ENCODE measurements at regions of chr5 and their contacts with region 1.

Region 1: DNA sequence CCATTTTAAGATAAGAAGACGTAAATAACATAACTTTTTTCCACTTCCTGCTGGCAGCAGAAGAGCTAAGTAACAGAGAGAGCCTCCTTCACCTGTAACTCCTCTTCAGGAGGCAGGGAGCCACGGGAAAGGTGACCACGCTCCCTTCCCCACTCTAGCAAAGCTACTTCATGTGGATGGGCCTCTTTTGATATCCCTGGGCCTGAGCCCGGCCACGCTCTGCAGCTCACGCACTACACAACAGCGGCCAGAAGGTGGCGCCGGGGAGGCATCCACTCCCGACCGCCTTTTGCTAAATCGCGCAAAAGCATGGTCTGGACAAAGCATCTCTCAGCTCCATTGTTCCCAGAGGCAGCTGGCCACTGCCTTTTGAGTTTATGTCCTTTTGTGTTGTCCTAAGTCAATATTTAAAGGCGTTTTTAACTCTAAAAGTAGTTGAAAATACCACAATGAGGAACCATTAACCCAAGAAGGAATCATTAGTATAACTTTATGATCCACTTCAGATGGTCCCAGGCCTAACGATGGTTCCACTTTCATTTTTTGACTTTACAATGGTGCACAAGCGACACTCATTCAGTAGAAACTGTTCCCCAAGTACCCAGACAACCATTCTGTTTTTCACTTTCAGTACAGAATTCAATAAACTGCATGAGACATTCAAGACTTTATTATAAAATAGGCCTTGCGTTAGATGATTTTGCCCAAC is 23.6 kb downstream of the CMBL start:
- DNase-seq: peak; percentile 87
- H3K4me3 Mint-ChIP-seq: no peak overlapping the region
- H3K27ac Mint-ChIP-seq: peak overlapping the region; percentile 13
- H3K4me1 Mint-ChIP-seq: peaks cover 18% of the 10 kb centered on the region
- H3K27me3 Mint-ChIP-seq: no peaks in the 10 kb centered on the region

Region 2: DNA sequence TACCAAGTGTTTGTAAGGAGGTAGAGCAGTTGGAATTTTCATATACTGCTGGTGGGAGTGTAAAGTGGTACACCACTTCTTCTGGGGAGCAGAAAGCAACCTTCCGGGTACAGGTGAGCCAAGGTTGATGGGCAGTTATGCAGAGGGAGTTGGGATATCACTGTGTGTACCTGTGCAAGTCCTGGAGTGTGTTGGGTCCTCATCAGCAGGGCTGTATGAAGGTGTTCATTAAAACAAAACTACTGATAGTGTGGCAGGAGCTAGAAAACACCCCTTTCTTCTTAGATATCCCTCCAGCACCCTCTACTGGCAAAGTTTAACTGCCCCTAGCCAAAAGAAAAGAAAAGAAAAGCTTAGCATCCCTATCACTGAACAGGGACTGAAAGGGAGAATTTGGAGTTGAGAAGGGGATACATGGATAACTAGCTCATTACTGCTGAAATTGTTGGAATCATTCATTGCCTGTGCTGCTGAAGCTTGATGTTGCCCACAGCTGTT is 80.2 kb after region 1 on chr5:
- CTCF ChIA-PET with region 1: interaction called, 14 read pairs
- POLR2A ChIA-PET with region 1: no interaction called
- intact Hi-C with region 1: loop called (anchors 1 kb)
- DNase-seq: no peak
- H3K4me3 Mint-ChIP-seq: no peak overlapping the region
- H3K27ac Mint-ChIP-seq: no peak overlapping the region
- H3K4me1 Mint-ChIP-seq: peaks cover 72% of the 10 kb centered on the region
- H3K27me3 Mint-ChIP-seq: no peaks in the 10 kb centered on the region

Region 3: GRCh38 chr5:10418654-10419345 is 134.7 kb after region 1 on chr5:
- CTCF ChIA-PET with region 1: interaction called, 17 read pairs
- POLR2A ChIA-PET with region 1: no interaction called
- intact Hi-C with region 1: loop called (anchors 1 kb)
- DNase-seq: no peak
- H3K4me3 Mint-ChIP-seq: no peak overlapping the region
- H3K27ac Mint-ChIP-seq: peak overlapping the region; percentile 32
- H3K4me1 Mint-ChIP-seq: peaks cover 43% of the 10 kb centered on the region
- H3K27me3 Mint-ChIP-seq: no peaks in the 10 kb centered on the region

Region 4: DNA sequence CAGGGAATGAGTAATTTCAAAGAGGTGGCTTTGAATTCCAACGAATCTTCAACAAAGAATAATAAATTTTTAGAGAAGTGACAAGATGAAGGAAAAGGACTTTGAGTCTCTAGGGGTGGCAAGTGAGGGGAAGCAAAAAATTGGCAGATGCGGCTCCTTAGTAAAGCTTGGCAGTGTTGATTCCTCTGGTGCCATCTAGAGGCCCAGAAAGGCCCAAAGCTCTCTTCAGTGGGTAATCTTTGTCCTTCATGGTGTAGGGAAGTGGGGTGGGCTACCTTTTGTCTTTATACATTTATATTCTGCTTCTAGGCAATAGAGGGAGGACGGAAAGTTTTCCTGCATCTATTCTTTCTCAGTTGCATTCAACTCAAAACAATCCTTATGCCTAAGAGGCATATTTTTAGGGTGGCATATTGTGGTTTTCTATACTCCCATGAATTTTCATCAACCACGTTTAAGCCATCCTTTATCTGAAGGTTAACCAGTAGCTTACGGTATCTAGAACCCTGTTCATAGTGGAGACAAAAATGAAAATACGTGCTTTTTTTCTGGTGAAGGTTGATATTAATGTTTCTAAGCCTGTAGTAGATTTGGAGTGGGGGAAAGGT is 140.1 kb after region 1 on chr5:
- CTCF ChIA-PET with region 1: interaction called, 17 read pairs
- POLR2A ChIA-PET with region 1: no interaction called
- intact Hi-C with region 1: loop called (anchors 1 kb)
- DNase-seq: no peak
- H3K4me3 Mint-ChIP-seq: no peak overlapping the region
- H3K27ac Mint-ChIP-seq: no peak overlapping the region
- H3K4me1 Mint-ChIP-seq: peaks cover 30% of the 10 kb centered on the region
- H3K27me3 Mint-ChIP-seq: no peaks in the 10 kb centered on the region

Region 5: GRCh38 chr5:10441083-10441991 is 157.3 kb after region 1 on chr5 and contains the start of gene ROPN1L:
- CTCF ChIA-PET with region 1: interaction called, 5 read pairs
- POLR2A ChIA-PET with region 1: no interaction called
- intact Hi-C with region 1: loop called (anchors 2 kb)
- DNase-seq: peak; percentile 86
- H3K4me3 Mint-ChIP-seq: peak within 1 kb of the TSS; percentile 78
- H3K27ac Mint-ChIP-seq: no peak within 1 kb of the TSS
- H3K4me1 Mint-ChIP-seq: peaks cover 33% of the 10 kb centered on the region
- H3K27me3 Mint-ChIP-seq: no peaks in the 10 kb centered on the region
- total RNA-seq, gene ROPN1L: not detected

Region 6: DNA sequence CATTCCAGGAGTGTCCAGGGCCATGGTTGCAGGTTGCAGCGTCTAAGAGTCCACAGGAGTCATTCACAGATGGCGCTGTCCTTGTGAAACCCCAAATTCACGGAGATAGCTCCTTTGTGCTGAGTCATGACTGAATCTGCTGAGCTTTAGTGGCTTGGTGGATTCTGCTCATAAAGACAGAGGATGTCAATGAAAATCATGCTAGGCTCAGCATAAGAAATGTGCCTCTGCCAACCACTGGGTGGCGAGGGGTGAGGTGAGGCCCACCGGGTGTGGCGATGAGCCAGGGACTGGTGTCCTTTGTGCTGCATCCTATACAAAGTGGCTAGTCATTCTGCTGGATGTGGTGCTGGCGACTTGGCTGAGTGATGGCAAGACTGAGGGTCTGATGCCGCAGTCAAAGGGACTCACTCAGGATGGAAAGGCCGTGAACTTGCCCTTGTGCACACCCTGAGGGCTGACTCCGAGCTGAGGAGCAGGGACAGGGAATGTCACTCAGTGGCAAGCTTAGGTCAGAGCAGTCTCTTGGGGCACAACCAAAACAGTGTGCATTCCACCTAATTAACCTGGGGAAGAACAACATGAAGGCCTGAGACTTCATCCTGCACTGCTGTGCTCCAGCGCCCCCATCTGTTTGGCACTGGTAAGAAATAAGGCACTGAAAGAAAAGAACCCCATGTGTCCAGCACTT is 405.5 kb after region 1 on chr5:
- CTCF ChIA-PET with region 1: interaction called, 3 read pairs
- POLR2A ChIA-PET with region 1: no interaction called
- intact Hi-C with region 1: loop called (anchors 1 kb)
- DNase-seq: peak; percentile 64
- H3K4me3 Mint-ChIP-seq: no peak overlapping the region
- H3K27ac Mint-ChIP-seq: no peak overlapping the region
- H3K4me1 Mint-ChIP-seq: peaks cover 21% of the 10 kb centered on the region
- H3K27me3 Mint-ChIP-seq: no peaks in the 10 kb centered on the region

Measured in activated CD4-positive, alpha-beta memory T cell treated with anti-CD3 and anti-CD28 coated beads for 36 hours (primary cell).